Panc1 (cell line): ENCODE measurements at regions of chr11 and their contacts with region 1.

Region 1: DNA sequence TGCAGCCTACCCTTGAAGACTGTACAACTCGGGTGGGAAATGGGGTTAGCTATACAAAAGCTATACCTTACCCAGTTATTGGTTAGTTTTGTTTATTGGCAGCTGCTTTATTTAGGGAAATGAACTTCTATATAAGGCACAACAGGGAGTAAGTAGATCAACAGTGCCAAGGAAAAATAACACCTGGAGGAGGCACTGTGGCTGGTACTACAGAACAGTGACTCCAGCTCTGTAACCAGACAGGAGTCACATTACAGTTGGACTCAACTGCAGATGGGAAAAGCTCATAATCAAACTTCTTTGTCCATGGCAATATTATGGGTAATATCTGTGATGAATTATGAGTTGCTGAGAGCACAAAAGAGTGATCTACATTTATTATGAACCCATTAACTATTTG is 14.0 kb downstream of the P4HA3 start:
- DNase-seq: no peak
- ATAC-seq: 0 out of 2 replicates have a peak, but pooled peaks have one; percentile 56
- H3K4me3 ChIP-seq: no peak overlapping the region
- H3K27ac ChIP-seq: no peak overlapping the region
- H3K4me1 ChIP-seq: no peaks in the 10 kb centered on the region
- H3K27me3 ChIP-seq: peaks cover 2% of the 10 kb centered on the region; the same call in 1 of the 2 replicates
- CTCF ChIP-seq: no peak; the same call in 1 of the 2 replicates

Region 2: GRCh38 chr11:73760679-73761402 is 536.6 kb before region 1 on chr11 and contains the start of gene RAB6A:
- CTCF ChIA-PET with region 1: no interaction called
- POLR2A ChIA-PET with region 1: no interaction called
- in situ Hi-C with region 1: no loop called
- intact Hi-C with region 1: no loop called
- DNase-seq: peak; percentile 95
- ATAC-seq: peak; percentile 95
- H3K4me3 ChIP-seq: peak within 1 kb of the TSS; percentile 58 to 85
- H3K27ac ChIP-seq: peak within 1 kb of the TSS; percentile 89
- H3K4me1 ChIP-seq: peaks cover 19% of the 10 kb centered on the region; the same call in 1 of the 2 replicates
- H3K27me3 ChIP-seq: no peaks in the 10 kb centered on the region; the same call in 1 of the 2 replicates
- CTCF ChIP-seq: no peak
- total RNA-seq, gene RAB6A: 149 TPM

Region 3: GRCh38 chr11:74449369-74449931 is 152.0 kb after region 1 on chr11:
- CTCF ChIA-PET with region 1: interaction called, 12 read pairs
- POLR2A ChIA-PET with region 1: no interaction called
- in situ Hi-C with region 1: no loop called
- intact Hi-C with region 1: no loop called
- DNase-seq: peak; percentile 65
- ATAC-seq: peak; percentile 87
- H3K4me3 ChIP-seq: no peak overlapping the region
- H3K27ac ChIP-seq: no peak overlapping the region
- H3K4me1 ChIP-seq: no peaks in the 10 kb centered on the region
- H3K27me3 ChIP-seq: peaks cover 2% of the 10 kb centered on the region; the same call in 1 of the 2 replicates
- CTCF ChIP-seq: peak; percentile 86